ENCODE measurements at regions of chr1 and their contacts with region 1.

Region 1: DNA sequence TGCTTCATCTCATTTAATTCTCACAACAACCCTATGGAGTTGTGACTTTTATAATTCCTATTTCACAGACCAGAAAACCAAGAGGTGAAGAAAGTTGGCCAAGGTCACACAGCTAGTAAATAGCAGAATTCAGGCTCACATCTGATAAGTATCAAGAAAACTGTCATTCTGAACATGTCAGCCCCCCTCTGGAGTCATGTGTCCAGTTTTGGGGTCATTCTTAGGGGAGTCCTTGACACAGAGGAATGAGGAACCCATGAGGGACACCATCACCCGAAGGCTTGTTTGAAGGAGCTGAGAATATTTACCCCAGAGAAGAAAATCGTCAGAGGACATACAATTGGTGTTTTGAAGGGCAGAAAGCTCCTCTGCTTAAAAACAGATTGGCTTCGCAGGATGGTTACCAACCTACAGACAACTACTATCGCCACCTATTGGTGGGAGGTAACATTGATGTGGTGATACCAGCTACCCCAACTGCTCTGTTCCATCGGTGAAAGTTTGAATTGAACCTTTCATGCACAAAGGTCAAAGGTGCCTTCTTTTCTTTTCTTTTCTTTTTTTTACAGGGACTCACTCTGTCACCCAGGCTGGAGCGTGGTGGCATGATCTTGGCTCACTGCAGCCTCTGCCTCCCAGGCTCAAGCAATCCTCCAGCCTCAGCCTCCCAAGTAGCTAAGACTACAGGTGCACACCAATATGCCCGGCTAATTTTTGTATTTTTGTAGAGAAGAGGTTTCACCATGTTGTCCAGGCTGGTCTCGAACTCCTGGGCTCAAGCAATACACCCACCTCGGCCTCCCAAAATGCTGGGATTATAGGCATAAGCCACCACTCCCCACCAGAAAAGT is 31.3 kb downstream of the NCMAP start:
- DNase-seq: peak; percentile 9
- H3K4me3 ChIP-seq: no peak overlapping the region
- CTCF ChIP-seq: peak; percentile 65

Region 2: DNA sequence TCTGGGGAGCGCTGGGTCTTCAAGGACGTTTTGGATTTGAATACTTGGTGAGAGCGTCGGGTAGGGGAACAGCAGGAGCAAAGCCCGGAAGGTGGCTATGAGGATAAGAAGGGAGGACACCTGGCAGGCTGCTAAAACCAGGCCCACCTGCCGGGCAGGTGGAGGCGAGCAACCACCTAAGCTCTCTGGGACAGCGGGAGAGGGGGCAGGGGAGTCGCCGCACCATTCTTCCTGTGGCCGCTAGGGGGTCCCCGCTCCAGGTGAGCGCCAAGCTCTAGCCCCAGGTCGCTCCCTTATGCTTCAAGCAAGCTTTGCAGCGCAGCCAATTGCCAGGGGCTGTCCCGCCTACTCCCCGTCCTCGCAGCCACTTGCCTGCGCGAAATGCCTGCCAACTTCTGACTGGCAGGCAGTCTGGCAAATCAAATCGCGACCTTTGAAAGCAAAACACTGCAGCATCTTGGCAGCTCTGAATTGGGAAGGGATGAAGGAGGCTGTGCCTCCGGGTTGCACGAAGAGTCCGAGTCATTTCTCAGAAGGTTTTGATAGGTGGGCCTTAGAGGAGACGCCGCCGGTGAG is 171.8 kb before region 1 on chr1 and contains the start of gene NIPAL3:
- CTCF ChIA-PET with region 1: interaction called, 10 read pairs
- POLR2A ChIA-PET with region 1: no interaction called
- DNase-seq: peak; percentile 96
- H3K4me3 ChIP-seq: peak within 1 kb of the TSS; percentile 87
- CTCF ChIP-seq: peak; percentile 91

Region 3: GRCh38 chr1:24575915-24576587 is 11.1 kb before region 1 on chr1:
- CTCF ChIA-PET with region 1: interaction called, 25 read pairs
- POLR2A ChIA-PET with region 1: no interaction called
- DNase-seq: no peak
- H3K4me3 ChIP-seq: no peak overlapping the region
- CTCF ChIP-seq: no peak

Region 4: GRCh38 chr1:24601023-24601527 is 13.9 kb after region 1 on chr1:
- CTCF ChIA-PET with region 1: interaction called, 42 read pairs
- POLR2A ChIA-PET with region 1: no interaction called
- DNase-seq: peak; percentile 10
- H3K4me3 ChIP-seq: no peak overlapping the region
- CTCF ChIP-seq: no peak

Region 5: GRCh38 chr1:24609949-24610382 is 22.8 kb after region 1 on chr1:
- CTCF ChIA-PET with region 1: interaction called, 19 read pairs
- POLR2A ChIA-PET with region 1: no interaction called
- DNase-seq: no peak
- H3K4me3 ChIP-seq: no peak overlapping the region
- CTCF ChIP-seq: no peak

Region 6: DNA sequence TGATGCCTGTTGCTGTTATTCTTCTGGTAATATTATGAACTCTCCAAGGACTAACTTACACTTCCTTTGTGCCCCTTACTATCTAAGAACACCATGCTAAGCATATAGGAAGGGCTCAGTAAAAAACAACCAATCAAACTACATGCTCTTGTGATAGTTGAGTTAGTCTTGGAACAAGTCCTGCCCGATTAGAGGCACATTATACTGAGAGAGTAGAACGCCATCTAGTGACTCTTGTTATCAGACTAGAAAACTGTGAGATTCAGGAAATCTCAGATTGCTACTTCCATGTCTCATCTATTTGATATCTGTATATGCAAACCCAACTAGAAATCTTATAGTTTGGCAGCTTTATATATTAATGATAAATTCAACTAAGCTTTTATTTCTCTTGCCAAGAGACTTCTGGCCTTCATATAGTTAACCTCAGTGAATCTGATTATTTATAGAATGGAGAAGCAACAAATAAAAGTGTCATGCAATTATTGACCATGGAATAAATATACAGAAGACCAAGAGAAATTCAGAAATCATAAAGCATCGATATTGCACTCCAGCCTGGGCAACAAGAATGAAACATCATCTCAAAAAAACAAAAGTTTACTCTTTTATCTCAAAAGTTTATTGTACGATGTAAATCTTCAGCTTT is 48.1 kb after region 1 on chr1:
- CTCF ChIA-PET with region 1: interaction called, 54 read pairs
- POLR2A ChIA-PET with region 1: no interaction called
- DNase-seq: peak; percentile 56
- H3K4me3 ChIP-seq: no peak overlapping the region
- CTCF ChIP-seq: peak; percentile 56

Region 7: GRCh38 chr1:24805534-24806301 is 218.5 kb after region 1 on chr1:
- CTCF ChIA-PET with region 1: no interaction called
- POLR2A ChIA-PET with region 1: no interaction called
- DNase-seq: no peak
- H3K4me3 ChIP-seq: no peak overlapping the region
- CTCF ChIP-seq: no peak

Measured in AG04449 (cell line).